Activated naive CD8-positive, alpha-beta T cell treated with anti-CD3 and anti-CD28 coated beads, Interleukin-2, amount 10 ng/mL, durations not matched to agents 7 days and 5 days (primary cell): ENCODE measurements at regions of chr5 and their contacts with region 1.

Region 1: DNA sequence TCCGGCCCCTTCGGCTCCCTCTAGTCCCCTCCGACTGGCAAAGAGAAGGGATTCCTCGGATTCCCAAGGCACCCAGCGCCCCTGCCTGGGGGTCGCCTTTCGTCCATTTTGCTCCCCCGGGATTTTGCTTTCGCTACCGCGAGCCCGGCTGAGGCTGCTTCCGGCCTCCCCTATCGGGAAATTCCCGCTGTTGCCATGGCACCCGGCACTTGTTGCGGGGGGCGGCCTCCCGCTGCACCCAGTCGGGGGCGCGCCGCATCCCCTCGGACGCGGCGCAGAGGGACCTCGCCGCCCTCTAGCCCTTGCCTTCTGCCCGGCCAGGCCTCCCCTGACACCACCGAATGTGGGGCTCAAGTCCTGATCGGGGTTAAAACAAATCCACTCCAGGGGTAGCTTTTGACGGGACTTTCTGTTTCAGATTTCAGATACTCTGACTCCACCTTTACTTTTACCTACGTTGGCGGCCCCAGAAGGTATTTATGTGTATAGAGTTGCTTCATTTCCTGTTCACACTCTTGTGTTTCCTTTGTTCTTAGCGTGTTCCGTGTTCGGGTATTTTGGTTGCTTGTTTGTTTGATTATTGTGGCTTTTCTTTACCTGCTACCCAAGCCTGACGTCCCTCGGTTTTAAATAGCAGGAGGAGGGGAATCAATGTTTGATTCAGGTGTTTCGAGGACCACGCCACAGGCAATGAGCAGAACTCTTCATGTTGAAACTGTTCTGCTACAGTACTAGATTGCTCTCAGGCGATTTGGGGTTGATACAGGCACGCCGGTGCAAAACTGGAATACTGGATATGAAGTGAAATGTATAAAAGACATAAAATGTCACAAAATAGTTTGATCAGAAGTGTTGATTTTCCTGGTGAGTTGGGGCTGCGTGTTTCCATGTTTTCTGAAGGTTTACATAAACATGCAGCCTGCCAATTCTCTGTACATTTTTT is 1.5 kb downstream of the PARP8 start:
- DNase-seq: peak; percentile 88
- ATAC-seq: peak; percentile 70
- H3K4me3 Mint-ChIP-seq: peak overlapping the region; percentile 94
- H3K27ac Mint-ChIP-seq: peak overlapping the region; percentile 98
- H3K4me1 Mint-ChIP-seq: peaks cover 39% of the 10 kb centered on the region
- H3K27me3 Mint-ChIP-seq: no peaks in the 10 kb centered on the region

Region 2: GRCh38 chr5:50440651-50441492 is 227.1 kb before region 1 on chr5 and contains the start of gene EMB:
- POLR2A ChIA-PET with region 1: interaction called, 34 read pairs
- DNase-seq: peak; percentile 83
- ATAC-seq: peak; percentile 73
- H3K4me3 Mint-ChIP-seq: peak within 1 kb of the TSS; percentile 97
- H3K27ac Mint-ChIP-seq: peak within 1 kb of the TSS; percentile 95
- H3K4me1 Mint-ChIP-seq: peaks cover 48% of the 10 kb centered on the region
- H3K27me3 Mint-ChIP-seq: no peaks in the 10 kb centered on the region
- total RNA-seq, gene EMB: 188 to 203 TPM